ENCODE measurements at regions of chrX and their contacts with region 1.

Region 1: GRCh38 chrX:48957827-48958634 is 624 bp upstream of the OTUD5 start:
- DNase-seq: peak; percentile 87 to 98 (median 93)
- ATAC-seq: peak; percentile 80 to 81
- H3K4me3 Mint-ChIP-seq: peak overlapping the region; percentile 93 to 100 (median 99)
- H3K27ac Mint-ChIP-seq: peak overlapping the region; percentile 96 to 100 (median 100)
- H3K4me1 Mint-ChIP-seq: peaks cover 18 to 56% (median 42%) of the 10 kb centered on the region in 4 donors
- H3K27me3 Mint-ChIP-seq: no peaks in the 10 kb centered on the region

Region 2: DNA sequence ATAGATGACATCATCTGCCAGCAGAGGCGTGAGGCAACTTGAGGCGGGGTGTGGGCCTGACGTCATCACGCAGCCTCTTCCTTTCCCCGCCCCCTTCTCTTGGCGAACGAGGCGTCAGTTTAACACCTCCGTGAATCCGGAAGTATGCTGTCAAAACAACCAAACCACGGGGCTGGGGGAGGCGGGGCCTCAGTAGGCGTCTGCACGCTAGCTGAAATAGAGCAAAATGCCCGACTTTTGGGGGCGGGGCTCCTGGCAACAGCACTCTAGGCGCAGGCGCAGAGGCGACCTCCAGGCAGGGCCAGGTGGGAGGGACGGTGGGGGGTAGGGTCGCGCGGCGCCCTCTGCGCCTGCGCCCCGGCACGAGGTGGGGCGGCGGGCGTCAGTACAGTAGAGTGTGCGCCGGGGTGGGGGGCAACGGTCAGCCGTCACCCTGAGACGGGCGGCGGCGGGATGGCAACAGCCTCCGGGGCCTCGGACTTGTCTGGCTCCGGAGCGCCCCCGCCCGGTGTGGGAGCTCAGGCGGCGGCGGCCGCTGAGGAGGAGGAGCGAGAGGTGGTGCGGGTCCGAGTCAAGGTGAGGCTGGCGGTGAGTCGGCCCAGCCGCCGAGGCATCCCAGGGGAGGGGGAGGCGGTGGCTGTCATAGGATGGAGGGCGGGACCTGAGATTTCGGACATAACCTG is 418.5 kb before region 1 on chrX and contains the start of gene TBC1D25:
- POLR2A ChIA-PET with region 1: interaction called, 20 read pairs
- DNase-seq: peak; percentile 80 to 99 (median 96)
- ATAC-seq: peak; percentile 87 to 88
- H3K4me3 Mint-ChIP-seq: peak within 1 kb of the TSS; percentile 84 to 96 (median 87)
- H3K27ac Mint-ChIP-seq: peak within 1 kb of the TSS; percentile 66 to 99 (median 96)
- H3K4me1 Mint-ChIP-seq: peaks cover 12 to 23% (median 20%) of the 10 kb centered on the region in 4 donors
- H3K27me3 Mint-ChIP-seq: no peaks in the 10 kb centered on the region
- polyA plus RNA-seq, gene TBC1D25: 14.3 to 19.3 (median 18.0) TPM

Region 3: DNA sequence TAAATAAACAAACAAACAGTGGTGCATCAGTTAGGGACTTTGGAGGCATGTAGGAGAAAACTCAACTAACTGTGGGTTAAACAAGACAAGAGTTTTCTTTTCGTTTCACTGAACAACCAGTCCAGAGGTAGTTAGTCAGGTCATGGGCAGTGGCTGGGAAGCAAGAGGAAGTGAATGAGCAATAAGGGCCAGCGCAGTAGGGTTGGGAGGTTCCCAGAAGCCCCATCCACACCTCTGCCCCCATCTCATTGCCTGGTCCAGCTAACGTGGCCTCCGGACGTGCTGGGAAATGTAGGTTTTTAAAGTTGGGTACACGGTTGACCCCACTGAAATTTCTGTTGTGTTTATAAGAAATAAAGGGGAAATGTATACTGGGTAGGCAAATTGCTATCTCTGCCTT is 187.7 kb before region 1 on chrX:
- POLR2A ChIA-PET with region 1: no interaction called
- DNase-seq: no peak
- ATAC-seq: no peak
- H3K4me3 Mint-ChIP-seq: no peak overlapping the region
- H3K27ac Mint-ChIP-seq: no peak overlapping the region
- H3K4me1 Mint-ChIP-seq: no peaks in the 10 kb centered on the region
- H3K27me3 Mint-ChIP-seq: no peaks in the 10 kb centered on the region

Region 4: DNA sequence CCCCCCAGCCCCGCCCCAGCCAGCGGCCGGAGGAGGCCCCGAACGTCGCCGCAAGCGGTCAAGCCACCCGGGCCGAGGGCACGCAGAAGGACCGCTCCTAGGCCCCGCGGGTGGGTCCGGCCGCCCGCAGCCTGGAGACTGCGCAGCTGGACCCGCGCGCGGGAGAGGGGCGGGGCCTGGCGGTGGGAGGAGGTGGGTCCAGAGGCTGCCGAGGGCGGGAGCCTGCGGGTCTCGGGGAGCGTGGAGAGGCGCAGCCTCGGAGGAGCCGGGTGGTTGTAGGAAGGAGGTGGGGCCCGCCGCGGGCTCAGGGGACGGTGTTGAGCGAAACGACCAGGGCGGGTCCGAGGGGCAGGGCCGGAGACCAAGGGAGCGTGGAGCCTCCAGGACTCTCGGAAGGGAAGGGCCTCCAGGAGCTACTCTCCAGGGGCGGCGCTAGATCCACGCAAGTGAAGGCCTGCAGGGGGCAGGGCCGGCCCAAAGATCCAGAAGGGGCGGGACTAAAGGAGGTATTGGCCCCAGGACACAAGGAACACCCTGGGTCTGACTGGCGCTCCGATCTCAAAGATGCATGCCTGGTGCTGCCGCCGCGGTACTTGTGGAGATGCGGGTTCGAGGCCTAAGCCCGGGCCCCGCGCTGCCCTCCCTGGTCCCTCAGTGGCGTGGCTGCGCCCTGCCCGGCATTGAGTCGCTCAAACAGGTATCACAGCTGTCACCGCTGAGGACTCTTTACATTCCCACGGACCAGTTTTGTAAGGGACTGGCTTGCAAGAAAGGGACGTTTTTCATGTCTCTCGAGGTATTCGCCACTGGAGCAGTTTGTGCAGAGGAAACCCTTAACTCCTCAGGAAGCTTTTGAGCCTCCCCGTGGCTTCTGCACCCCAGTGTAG is 66.4 kb before region 1 on chrX:
- POLR2A ChIA-PET with region 1: interaction called, 24 read pairs
- DNase-seq: peak; percentile 53 to 84 (median 72)
- ATAC-seq: peak; percentile 88 to 90
- H3K4me3 Mint-ChIP-seq: peak overlapping the region; percentile 60 to 95 (median 82)
- H3K27ac Mint-ChIP-seq: peak overlapping the region in 7 of 10 donors; percentile 69 to 94 (median 85)
- H3K4me1 Mint-ChIP-seq: peaks cover 9 to 32% (median 23%) of the 10 kb centered on the region in 4 donors
- H3K27me3 Mint-ChIP-seq: no peaks in the 10 kb centered on the region

Region 5: GRCh38 chrX:48911412-48912182 is 46.4 kb before region 1 on chrX and contains the start of gene SLC35A2:
- POLR2A ChIA-PET with region 1: interaction called, 15 read pairs
- DNase-seq: peak; percentile 72 to 94 (median 90)
- ATAC-seq: peak; percentile 79 to 80
- H3K4me3 Mint-ChIP-seq: peak within 1 kb of the TSS; percentile 89 to 97 (median 94)
- H3K27ac Mint-ChIP-seq: peak within 1 kb of the TSS; percentile 88 to 98 (median 96)
- H3K4me1 Mint-ChIP-seq: peaks cover 16 to 59% (median 47%) of the 10 kb centered on the region in 4 donors
- H3K27me3 Mint-ChIP-seq: no peaks in the 10 kb centered on the region
- polyA plus RNA-seq, gene SLC35A2: 6.8 to 8.1 (median 7.3) TPM

Region 6: GRCh38 chrX:48937054-48937907 is 20.8 kb before region 1 on chrX:
- POLR2A ChIA-PET with region 1: interaction called, 94 read pairs
- DNase-seq: peak; percentile 65 to 97 (median 92)
- ATAC-seq: peak; percentile 72 to 73
- H3K4me3 Mint-ChIP-seq: peak overlapping the region; percentile 78 to 92 (median 87)
- H3K27ac Mint-ChIP-seq: peak overlapping the region; percentile 96 to 99 (median 99)
- H3K4me1 Mint-ChIP-seq: peaks cover 35 to 87% (median 81%) of the 10 kb centered on the region in 4 donors
- H3K27me3 Mint-ChIP-seq: no peaks in the 10 kb centered on the region

Region 7: GRCh38 chrX:48981178-48981577 is 23.1 kb after region 1 on chrX:
- POLR2A ChIA-PET with region 1: no interaction called
- DNase-seq: no peak
- ATAC-seq: no peak
- H3K4me3 Mint-ChIP-seq: no peak overlapping the region
- H3K27ac Mint-ChIP-seq: peak overlapping the region in 1 of 10 donors; percentile 45
- H3K4me1 Mint-ChIP-seq: no peaks in the 10 kb centered on the region
- H3K27me3 Mint-ChIP-seq: no peaks in the 10 kb centered on the region

Region 8: DNA sequence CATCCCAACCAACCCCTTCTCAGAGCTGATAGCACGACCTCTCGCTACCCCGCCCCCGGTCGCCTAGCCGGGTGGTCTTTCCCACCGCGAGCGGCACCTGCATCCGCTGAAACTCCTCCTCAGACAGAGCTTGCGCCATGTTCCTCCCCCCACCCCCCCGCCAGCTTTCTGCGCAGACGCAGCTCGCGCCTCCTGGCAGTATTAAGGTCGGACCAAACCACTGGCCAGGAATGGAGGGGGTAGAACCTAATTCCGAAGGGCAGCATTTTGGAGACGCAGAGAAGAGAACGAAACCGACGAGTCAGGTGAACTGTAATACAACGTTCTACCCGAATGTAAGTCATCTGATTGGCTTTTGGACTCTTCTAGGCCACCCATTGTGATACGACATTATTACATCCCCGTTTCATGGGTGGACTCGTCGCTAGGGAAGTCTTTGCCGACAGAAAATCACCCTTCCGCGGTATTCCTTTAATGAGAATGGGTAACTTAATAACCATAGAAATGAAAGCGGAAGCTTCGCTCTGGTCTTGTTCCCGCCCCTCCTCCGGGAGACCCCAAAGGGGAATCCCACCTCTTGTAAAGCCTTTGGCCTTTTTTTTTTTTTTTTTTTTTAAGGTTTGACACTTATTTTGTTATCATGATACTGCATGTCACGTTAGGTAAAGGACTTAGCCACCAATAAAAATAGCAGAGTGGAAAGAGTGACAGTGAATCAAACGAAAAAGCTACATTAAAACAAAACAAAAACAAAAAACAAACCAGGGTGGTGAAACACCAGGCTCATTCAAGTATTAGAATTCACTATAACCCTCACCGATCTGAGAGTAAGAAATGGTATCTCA is 44.3 kb after region 1 on chrX and contains the start of gene GRIPAP1:
- POLR2A ChIA-PET with region 1: interaction called, 18 read pairs
- DNase-seq: peak; percentile 64 to 91 (median 82)
- ATAC-seq: peak; percentile 77
- H3K4me3 Mint-ChIP-seq: peak within 1 kb of the TSS; percentile 96 to 100 (median 98)
- H3K27ac Mint-ChIP-seq: peak within 1 kb of the TSS; percentile 93 to 100 (median 98)
- H3K4me1 Mint-ChIP-seq: peaks cover 11 to 40% (median 32%) of the 10 kb centered on the region in 4 donors
- H3K27me3 Mint-ChIP-seq: no peaks in the 10 kb centered on the region
- polyA plus RNA-seq, gene GRIPAP1: 6.8 to 15.9 (median 12.6) TPM

Region 9: DNA sequence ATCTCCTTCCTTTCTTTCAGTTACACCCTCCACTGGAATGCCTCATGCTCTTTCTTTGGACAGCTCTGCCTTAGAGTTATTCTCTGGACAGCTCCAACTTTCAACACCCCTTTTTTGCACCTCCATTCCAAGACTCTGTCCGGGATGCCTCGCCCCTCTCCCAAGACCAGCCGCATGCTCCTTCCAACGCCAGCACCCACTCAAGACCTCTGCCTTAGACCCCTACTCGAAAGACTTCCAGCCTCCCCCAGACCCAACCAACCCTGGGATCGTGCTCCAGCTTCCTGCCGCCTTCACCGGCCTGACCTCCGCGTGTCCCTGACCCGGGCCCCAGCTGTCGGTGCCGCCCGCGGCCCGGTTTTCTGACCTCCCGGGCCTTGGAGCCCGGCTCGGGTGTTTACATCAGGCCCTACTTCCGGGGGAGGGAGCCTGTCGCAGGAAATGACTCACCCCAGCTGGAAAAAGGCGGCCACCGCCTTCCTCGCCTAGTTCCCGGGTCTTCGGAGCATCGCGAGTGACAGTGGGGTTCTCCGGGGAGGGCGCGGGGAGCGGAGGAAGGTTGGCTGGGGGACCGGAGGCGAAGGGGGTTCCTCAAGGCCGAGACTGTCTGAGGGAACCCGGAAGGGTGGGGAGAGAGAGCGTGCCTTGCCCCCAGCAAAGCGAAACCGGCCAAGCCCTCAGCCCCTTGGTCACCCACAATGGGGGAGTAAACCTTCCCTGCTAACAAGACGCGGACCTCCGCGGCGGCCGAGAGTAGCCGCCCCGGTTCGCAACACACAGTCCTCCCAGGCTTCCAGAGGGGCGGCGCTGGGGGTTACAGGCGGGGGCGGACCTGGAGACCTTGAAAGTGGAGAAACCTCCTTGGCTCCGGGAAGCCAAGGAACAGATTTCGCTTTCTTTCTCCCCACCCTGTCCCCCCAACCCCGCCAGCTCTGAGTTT is 121.7 kb after region 1 on chrX and contains the start of gene WDR45:
- POLR2A ChIA-PET with region 1: interaction called, 17 read pairs
- DNase-seq: peak; percentile 47 to 86 (median 66)
- ATAC-seq: peak; percentile 83 to 84
- H3K4me3 Mint-ChIP-seq: peak within 1 kb of the TSS; percentile 88 to 97 (median 92)
- H3K27ac Mint-ChIP-seq: peak within 1 kb of the TSS; percentile 95 to 100 (median 98)
- H3K4me1 Mint-ChIP-seq: peaks cover 10 to 13% (median 11%) of the 10 kb centered on the region in 4 donors
- H3K27me3 Mint-ChIP-seq: no peaks in the 10 kb centered on the region
- polyA plus RNA-seq, gene WDR45: 42.4 to 57.2 (median 43.3) TPM

Measured in naive thymus-derived CD8-positive, alpha-beta T cell (primary cell).